ENCODE measurements at regions of chr13 and their contacts with region 1.

Region 1: GRCh38 chr13:106530980-106531481 is 4.4 kb downstream of the EFNB2 start:
- DNase-seq: peak; percentile 61
- H3K4me3 ChIP-seq: peak overlapping the region in 2 of 3 experiments; percentile 75 to 95
- H3K27ac ChIP-seq: no peak overlapping the region
- H3K4me1 ChIP-seq: peaks cover 24% of the 10 kb centered on the region
- H3K27me3 ChIP-seq: no peaks in the 10 kb centered on the region
- CTCF ChIP-seq: no peak
- POLR2A ChIP-seq: no peak

Region 2: GRCh38 chr13:106318941-106319411 is 212.1 kb before region 1 on chr13:
- CTCF ChIA-PET with region 1: no interaction called
- POLR2A ChIA-PET with region 1: no interaction called
- dilution Hi-C with region 1: no loop called
- intact Hi-C with region 1: loop called (anchors 1 kb)
- DNase-seq: peak; percentile 97
- H3K4me3 ChIP-seq: no peak overlapping the region
- H3K27ac ChIP-seq: peak overlapping the region; percentile 89
- H3K4me1 ChIP-seq: peaks cover 20% of the 10 kb centered on the region
- H3K27me3 ChIP-seq: no peaks in the 10 kb centered on the region
- CTCF ChIP-seq: no peak
- POLR2A ChIP-seq: peak; percentile 38